ENCODE measurements at regions of chr14 and their contacts with region 1.

Region 1: DNA sequence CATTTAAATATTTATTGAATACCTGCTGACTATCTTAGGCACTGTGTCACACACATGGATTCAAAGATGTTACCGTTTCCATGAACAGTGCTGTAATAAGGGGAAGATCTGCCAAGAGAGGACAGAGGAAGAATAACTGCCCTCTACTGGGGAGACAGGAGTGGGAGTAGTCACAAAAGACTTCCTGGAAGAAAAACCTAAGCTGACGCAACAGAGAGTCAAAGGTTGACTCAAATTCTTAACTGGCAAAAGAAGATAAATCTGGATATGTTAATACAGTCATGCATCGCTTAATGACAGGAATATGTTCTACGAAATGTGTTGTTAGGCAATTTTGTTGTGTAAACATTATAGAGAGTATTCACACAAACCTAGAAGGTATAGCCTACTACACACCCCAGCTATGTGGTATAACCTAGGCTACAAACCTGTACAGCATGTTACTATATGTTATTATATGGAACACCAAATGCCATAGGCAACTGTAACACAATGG is 51.5 kb downstream of the DCAF5 start:
- DNase-seq: no peak
- ATAC-seq: peak; percentile 89 to 92

Region 2: GRCh38 chr14:68905107-68905895 is 196.1 kb before region 1 on chr14:
- intact Hi-C with region 1: loop called (anchors 5 to 10 kb)
- DNase-seq: no peak
- ATAC-seq: no peak

Measured in left cardiac atrium (tissue), 4 donors.